Activated CD8-positive, alpha-beta T cell treated with anti-CD3 and anti-CD28 coated beads for 36 hours (primary cell): ENCODE measurements at regions of chr1 and their contacts with region 1.

Region 1: GRCh38 chr1:160226623-160227022 is 21.4 kb downstream of the PEA15 start:
- DNase-seq: no peak
- ATAC-seq: no peak
- H3K4me3 Mint-ChIP-seq: no peak overlapping the region
- H3K27ac Mint-ChIP-seq: no peak overlapping the region
- H3K4me1 Mint-ChIP-seq: no peaks in the 10 kb centered on the region
- H3K27me3 Mint-ChIP-seq: no peaks in the 10 kb centered on the region
- CTCF ChIP-seq: no peak

Region 2: DNA sequence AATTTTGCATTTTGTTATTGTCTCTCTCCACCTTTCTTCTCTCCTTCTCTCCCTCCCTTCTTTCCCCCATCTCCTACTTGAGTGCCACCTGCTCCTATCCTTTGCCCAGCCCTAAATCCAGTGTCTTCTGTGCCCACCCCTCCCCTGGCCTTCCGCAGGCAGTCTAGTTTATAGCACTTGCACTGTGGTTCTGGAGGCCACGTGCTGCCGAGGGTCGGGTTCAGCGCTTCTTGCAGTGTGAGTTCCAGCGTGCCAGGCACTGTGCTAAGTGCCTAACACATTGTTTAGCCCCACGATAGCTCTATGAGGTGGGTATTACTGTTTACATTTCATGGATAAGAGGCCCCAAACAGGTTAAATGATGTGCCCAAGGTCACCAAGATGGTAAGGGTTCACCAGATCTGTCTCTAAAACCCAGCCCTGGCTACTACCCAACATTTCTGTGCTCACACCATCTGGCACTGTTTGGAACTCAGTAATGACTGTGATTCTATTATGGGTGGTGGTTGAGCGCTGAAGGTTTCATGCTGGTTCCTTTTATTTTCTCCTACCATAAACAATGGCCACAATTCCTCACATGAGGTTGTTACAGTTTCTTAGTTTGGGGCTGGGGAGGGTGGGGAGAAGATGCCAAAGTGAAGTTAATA is 89.3 kb before region 1 on chr1:
- CTCF ChIA-PET with region 1: no interaction called
- POLR2A ChIA-PET with region 1: no interaction called
- intact Hi-C with region 1: no loop called
- DNase-seq: no peak
- ATAC-seq: no peak
- H3K4me3 Mint-ChIP-seq: no peak overlapping the region
- H3K27ac Mint-ChIP-seq: no peak overlapping the region
- H3K4me1 Mint-ChIP-seq: no peaks in the 10 kb centered on the region
- H3K27me3 Mint-ChIP-seq: peaks cover 1% of the 10 kb centered on the region
- CTCF ChIP-seq: no peak

Region 3: DNA sequence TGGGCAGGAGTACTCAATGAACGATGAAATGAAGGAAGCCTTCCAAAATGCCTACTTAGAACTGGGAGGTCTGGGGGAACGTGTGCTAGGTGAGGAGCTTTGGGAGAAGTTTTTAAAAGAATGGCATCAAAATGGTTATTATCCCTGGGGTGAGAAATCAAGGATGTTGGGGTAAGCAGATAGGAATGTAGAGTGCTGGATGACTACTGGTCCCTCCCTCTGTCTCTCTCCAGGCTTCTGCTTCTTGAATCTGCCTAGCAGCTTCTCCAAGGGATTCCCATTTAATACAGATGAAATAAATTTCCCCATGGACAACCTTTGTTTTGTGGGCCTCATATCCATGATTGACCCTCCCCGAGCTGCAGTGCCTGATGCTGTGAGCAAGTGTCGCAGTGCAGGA is 55.3 kb before region 1 on chr1:
- CTCF ChIA-PET with region 1: no interaction called
- POLR2A ChIA-PET with region 1: no interaction called
- intact Hi-C with region 1: no loop called
- DNase-seq: no peak
- ATAC-seq: no peak
- H3K4me3 Mint-ChIP-seq: no peak overlapping the region
- H3K27ac Mint-ChIP-seq: no peak overlapping the region
- H3K4me1 Mint-ChIP-seq: peaks cover 30% of the 10 kb centered on the region
- H3K27me3 Mint-ChIP-seq: peaks cover 8% of the 10 kb centered on the region
- CTCF ChIP-seq: no peak

Region 4: DNA sequence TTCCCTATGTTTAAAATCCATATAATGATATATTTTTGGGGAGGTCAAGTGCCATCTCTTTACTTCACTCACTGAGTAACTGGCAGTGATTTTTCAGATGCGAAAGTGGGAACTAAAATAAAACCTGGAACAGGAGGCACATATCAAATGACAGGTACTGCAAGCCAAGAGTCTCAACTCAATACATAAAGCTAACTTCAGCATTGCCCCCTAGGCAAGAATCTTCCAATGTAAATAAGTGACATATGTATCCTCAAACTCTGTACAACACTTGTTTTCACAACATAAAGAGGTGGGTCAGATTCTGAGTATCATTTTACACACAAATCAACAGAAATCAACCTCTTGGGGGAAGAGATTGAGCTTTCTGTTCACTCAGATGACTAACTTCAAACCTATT is 17.6 kb after region 1 on chr1:
- CTCF ChIA-PET with region 1: interaction called, 3 read pairs
- POLR2A ChIA-PET with region 1: interaction called, 11 read pairs
- intact Hi-C with region 1: no loop called
- DNase-seq: no peak
- ATAC-seq: no peak
- H3K4me3 Mint-ChIP-seq: no peak overlapping the region
- H3K27ac Mint-ChIP-seq: no peak overlapping the region
- H3K4me1 Mint-ChIP-seq: peaks cover 5% of the 10 kb centered on the region
- H3K27me3 Mint-ChIP-seq: no peaks in the 10 kb centered on the region
- CTCF ChIP-seq: no peak